MCF 10A (cell line): ENCODE measurements at regions of chr17 and their contacts with region 1.

Region 1: GRCh38 chr17:50094753-50095619 is at the start of gene PDK2:
- DNase-seq: peak; percentile 96
- H3K4me3 Mint-ChIP-seq: peak within 1 kb of the TSS; percentile 92
- H3K27ac Mint-ChIP-seq: peak within 1 kb of the TSS; percentile 82
- H3K4me1 Mint-ChIP-seq: peaks cover 24% of the 10 kb centered on the region
- H3K27me3 Mint-ChIP-seq: no peaks in the 10 kb centered on the region
- CTCF ChIP-seq: no peak
- total RNA-seq, gene PDK2: 9.9 and 11.2 TPM in 2 replicates

Region 2: DNA sequence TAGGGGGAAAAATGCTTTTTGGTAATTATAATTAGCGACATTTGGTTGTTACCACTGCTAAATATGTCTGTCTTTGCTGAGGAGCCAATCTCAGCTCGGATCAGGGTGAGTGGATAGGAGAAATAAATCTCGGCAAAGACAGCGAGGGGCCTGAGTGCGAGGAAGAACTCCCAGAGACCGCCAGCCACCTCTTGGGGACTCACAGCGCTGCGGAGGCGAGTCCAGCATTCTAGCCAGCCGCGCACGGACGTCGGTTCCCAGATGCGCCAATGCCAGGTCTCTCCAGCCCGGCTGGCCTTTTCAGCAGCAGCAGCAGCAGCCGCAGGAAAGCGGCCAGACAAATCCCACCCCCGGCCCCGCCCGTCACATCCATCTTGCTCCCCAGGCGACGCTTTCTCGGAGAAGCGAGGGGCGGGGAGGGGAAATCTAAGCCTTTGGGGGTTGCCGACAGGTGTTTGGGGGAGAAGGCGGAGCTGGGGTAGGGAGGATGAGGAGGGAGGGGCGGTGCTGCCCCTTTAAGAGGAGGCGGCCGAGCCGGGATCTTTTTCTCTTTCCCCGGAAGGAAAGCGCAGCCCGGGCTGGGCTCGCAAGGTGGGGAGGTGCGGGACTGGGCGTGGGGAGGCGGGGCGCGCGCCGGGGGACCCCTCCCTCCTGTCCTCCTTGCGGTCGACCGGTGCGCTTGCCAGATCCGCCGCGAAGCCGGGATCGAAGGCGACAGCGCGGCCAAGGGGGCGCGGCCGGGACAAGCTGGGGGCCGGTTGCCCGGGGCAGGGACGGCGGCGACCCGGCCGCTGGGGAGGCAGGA is 39.4 kb before region 1 on chr17 and contains the start of gene ITGA3:
- CTCF ChIA-PET with region 1: interaction called, 79 read pairs
- POLR2A ChIA-PET with region 1: interaction called, 77 read pairs
- intact Hi-C with region 1: no loop called
- DNase-seq: peak; percentile 98
- H3K4me3 Mint-ChIP-seq: peak within 1 kb of the TSS; percentile 80
- H3K27ac Mint-ChIP-seq: peak within 1 kb of the TSS; percentile 95
- H3K4me1 Mint-ChIP-seq: peaks cover 64% of the 10 kb centered on the region
- H3K27me3 Mint-ChIP-seq: no peaks in the 10 kb centered on the region
- CTCF ChIP-seq: no peak
- total RNA-seq, gene ITGA3: 588 and 717 TPM in 2 replicates

Region 3: GRCh38 chr17:50079334-50080095 is 15.5 kb before region 1 on chr17:
- CTCF ChIA-PET with region 1: interaction called, 28 read pairs
- POLR2A ChIA-PET with region 1: interaction called, 3 read pairs
- intact Hi-C with region 1: no loop called
- DNase-seq: peak; percentile 74
- H3K4me3 Mint-ChIP-seq: no peak overlapping the region
- H3K27ac Mint-ChIP-seq: peak overlapping the region; percentile 43
- H3K4me1 Mint-ChIP-seq: peaks cover 12% of the 10 kb centered on the region
- H3K27me3 Mint-ChIP-seq: no peaks in the 10 kb centered on the region
- CTCF ChIP-seq: peak; percentile 54

Region 4: GRCh38 chr17:50139950-50140871 is 45.2 kb after region 1 on chr17:
- CTCF ChIA-PET with region 1: interaction called, 11 read pairs
- POLR2A ChIA-PET with region 1: no interaction called
- intact Hi-C with region 1: no loop called
- DNase-seq: peak; percentile 73
- H3K4me3 Mint-ChIP-seq: no peak overlapping the region
- H3K27ac Mint-ChIP-seq: no peak overlapping the region
- H3K4me1 Mint-ChIP-seq: peaks cover 13% of the 10 kb centered on the region
- H3K27me3 Mint-ChIP-seq: no peaks in the 10 kb centered on the region
- CTCF ChIP-seq: peak; percentile 91

Region 5: GRCh38 chr17:50177983-50178834 is 83.2 kb after region 1 on chr17:
- CTCF ChIA-PET with region 1: interaction called, 4 read pairs
- POLR2A ChIA-PET with region 1: interaction called, 10 read pairs
- intact Hi-C with region 1: no loop called
- DNase-seq: peak; percentile 98
- H3K4me3 Mint-ChIP-seq: peak overlapping the region; percentile 15
- H3K27ac Mint-ChIP-seq: peak overlapping the region; percentile 52
- H3K4me1 Mint-ChIP-seq: peaks cover 42% of the 10 kb centered on the region
- H3K27me3 Mint-ChIP-seq: no peaks in the 10 kb centered on the region
- CTCF ChIP-seq: peak; percentile 33

Region 6: DNA sequence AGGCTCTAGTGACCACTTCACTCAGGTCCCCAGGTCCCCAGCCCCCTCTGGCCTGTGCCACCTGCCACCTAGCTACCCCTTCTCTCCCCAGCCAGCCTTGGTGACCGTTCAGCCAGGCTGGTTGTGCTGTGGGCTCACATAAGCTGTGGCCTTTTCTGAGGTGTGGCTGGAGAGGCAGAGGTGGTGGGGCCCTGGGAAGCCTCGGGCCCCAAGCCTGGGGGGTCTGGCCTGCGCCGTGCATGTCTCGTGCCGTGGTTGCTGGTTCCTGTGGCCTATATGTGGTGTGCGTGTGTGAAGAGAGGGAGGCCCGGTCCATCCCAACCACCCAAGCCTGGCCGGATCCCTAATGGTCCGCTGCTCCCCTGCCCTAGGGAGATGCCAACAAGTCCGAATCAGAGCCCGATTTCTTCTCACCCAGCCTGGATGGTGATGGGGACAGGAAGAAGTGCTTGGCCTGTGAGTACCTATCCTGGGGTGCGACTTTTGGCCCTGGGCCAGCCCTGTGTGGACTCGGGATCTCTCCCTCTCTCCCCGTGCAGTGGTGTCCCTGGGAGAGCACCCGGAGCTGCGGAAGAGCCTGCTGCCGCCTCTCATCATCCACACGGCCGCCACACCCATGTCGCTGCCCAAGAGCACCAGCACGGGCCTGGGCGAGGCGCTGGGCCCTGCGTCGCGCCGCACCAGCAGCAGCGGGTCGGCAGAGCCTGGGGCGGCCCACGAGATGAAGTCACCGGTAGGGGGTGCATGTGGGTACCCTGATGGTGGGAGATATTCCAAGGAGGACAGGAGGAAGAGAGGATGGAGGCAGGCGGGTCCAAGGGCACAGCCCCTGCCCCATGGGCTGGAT is 501.4 kb after region 1 on chr17:
- CTCF ChIA-PET with region 1: no interaction called
- POLR2A ChIA-PET with region 1: no interaction called
- intact Hi-C with region 1: no loop called
- DNase-seq: no peak
- H3K4me3 Mint-ChIP-seq: no peak overlapping the region
- H3K27ac Mint-ChIP-seq: no peak overlapping the region
- H3K4me1 Mint-ChIP-seq: no peaks in the 10 kb centered on the region
- H3K27me3 Mint-ChIP-seq: peaks cover 11% of the 10 kb centered on the region
- CTCF ChIP-seq: no peak

Region 7: DNA sequence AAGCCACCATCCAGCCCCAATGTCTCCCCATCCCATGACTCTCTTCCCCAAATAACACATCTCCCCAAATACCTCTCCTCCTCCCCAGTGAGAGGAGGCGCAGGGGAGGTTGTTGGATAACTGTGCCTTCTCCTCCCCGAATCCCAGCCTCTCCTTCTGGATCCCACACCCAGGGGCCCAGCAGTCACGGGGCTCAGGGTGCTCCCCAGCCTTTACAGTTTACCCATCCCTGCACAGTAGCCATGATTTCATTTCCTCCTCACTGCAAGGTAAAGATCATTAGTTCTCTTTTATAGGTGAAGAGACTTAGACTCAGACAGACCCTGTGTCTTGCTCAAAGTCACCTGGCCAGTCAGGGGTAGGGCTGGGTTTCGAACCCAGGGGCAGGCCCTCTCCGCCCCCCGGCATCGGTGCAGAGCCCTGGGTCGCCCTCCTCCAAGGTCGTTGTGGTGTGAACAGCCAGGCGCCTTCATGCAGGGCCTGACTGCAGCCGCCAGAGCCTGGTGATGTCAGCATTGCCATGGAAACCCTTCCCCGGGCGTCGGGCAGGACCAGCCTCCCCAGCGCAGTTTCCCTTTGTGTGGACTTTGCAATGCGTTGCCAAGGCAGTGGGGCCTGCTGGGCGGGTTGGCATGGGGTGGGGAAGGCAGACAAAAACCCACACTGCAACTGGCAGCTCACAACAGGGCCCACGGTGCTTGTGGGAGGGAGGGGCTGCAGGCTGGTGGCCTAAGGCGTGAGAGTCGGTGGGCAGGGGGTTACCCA is 824.5 kb after region 1 on chr17:
- CTCF ChIA-PET with region 1: no interaction called
- POLR2A ChIA-PET with region 1: no interaction called
- intact Hi-C with region 1: no loop called
- DNase-seq: peak; percentile 72
- H3K4me3 Mint-ChIP-seq: no peak overlapping the region
- H3K27ac Mint-ChIP-seq: no peak overlapping the region
- H3K4me1 Mint-ChIP-seq: peaks cover 21% of the 10 kb centered on the region
- H3K27me3 Mint-ChIP-seq: no peaks in the 10 kb centered on the region
- CTCF ChIP-seq: no peak